ENCODE measurements at regions of chr6 and their contacts with region 1.

Region 1: GRCh38 chr6:17706580-17707370 is at the start of gene NUP153:
- DNase-seq: peak; percentile 97 to 100
- H3K4me3 ChIP-seq: peak within 1 kb of the TSS; percentile 80 to 92 (median 89)
- H3K27ac ChIP-seq: peak within 1 kb of the TSS; percentile 93
- H3K4me1 ChIP-seq: peaks cover 0 to 6% (median 0%) of the 10 kb centered on the region in 4 experiments; a peak in 3 of 7 replicates
- H3K27me3 ChIP-seq: no peaks in the 10 kb centered on the region
- CTCF ChIP-seq: no peak
- EP300 ChIP-seq: peak in 1 of 2 experiments; percentile 78; a peak in 1 of 3 replicates
- POLR2A ChIP-seq: peak; percentile 93
- RAD21 ChIP-seq: no peak; a peak in 1 of 4 replicates
- total RNA-seq, gene NUP153: 84.8 and 86.8 TPM in 2 replicates

Region 2: GRCh38 chr6:17729324-17730077 is 22.7 kb after region 1 on chr6:
- CTCF ChIA-PET with region 1: interaction called, 8 read pairs
- POLR2A ChIA-PET with region 1: interaction called, 14 read pairs
- DNase-seq: no peak
- H3K4me3 ChIP-seq: no peak overlapping the region
- H3K27ac ChIP-seq: no peak overlapping the region
- H3K4me1 ChIP-seq: no peaks in the 10 kb centered on the region
- H3K27me3 ChIP-seq: no peaks in the 10 kb centered on the region
- CTCF ChIP-seq: no peak
- EP300 ChIP-seq: no peak
- POLR2A ChIP-seq: no peak
- RAD21 ChIP-seq: no peak

Region 3: GRCh38 chr6:19303383-19303782 is 1596.6 kb after region 1 on chr6:
- CTCF ChIA-PET with region 1: no interaction called
- POLR2A ChIA-PET with region 1: no interaction called
- DNase-seq: no peak
- H3K4me3 ChIP-seq: no peak overlapping the region
- H3K27ac ChIP-seq: no peak overlapping the region
- H3K4me1 ChIP-seq: peaks cover 0 to 4% (median under 1%) of the 10 kb centered on the region in 4 experiments; a peak in 2 of 7 replicates
- H3K27me3 ChIP-seq: no peaks in the 10 kb centered on the region
- CTCF ChIP-seq: no peak
- EP300 ChIP-seq: no peak
- POLR2A ChIP-seq: no peak
- RAD21 ChIP-seq: no peak